ENCODE measurements at regions of chr17 and their contacts with region 1.

Region 1: DNA sequence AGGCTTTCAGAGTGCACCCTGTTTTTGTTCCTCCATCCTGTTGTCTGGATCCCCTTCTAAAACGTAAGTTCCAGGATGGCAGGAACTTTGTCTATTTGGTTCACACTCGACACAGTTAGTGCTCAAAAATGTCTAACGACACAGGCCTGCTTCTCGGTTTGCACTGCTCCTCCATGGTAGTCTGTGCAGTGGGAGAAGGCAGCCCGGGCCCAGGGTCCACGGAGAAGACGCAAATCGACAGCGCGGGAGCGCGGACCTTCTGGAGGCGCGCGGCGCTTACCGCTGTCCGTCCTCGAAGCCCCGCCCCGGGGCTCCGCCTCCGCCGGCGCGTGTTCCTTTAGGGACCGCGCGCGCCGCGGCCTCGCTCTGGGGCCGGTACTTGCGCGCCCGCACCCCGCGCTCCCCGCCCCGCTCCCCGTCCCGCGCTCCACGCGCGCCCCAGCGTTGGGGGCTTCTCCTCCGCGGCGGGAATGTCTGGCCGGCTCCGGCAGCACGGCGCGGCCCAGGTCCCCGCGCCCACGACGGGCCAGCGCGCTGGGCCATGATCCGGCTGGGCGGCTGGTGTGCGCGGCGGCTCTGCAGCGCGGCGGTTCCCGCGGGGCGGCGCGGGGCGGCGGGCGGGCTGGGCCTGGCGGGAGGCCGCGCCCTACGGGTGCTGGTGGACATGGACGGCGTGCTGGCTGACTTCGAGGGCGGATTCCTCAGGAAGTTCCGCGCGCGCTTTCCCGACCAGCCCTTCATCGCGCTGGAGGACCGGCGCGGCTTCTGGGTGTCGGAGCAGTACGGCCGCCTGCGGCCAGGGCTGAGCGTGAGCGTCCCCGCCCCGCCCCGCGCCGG is at the start of gene NT5M:
- DNase-seq: no peak
- ATAC-seq: peak; percentile 77
- H3K4me3 ChIP-seq: peak within 1 kb of the TSS; percentile 94
- H3K27ac ChIP-seq: peak within 1 kb of the TSS; percentile 35
- H3K4me1 ChIP-seq: peaks cover 34% of the 10 kb centered on the region
- H3K27me3 ChIP-seq: no peaks in the 10 kb centered on the region
- CTCF ChIP-seq: no peak
- EP300 ChIP-seq: no peak
- POLR2A ChIP-seq: peak; percentile 70
- RAD21 ChIP-seq: no peak
- polyA plus RNA-seq, gene NT5M: 0.18 to 1.5 TPM

Region 2: GRCh38 chr17:17206124-17206912 is 96.9 kb before region 1 on chr17 and contains the start of gene PLD6:
- CTCF ChIA-PET with region 1: interaction called, 3 read pairs
- POLR2A ChIA-PET with region 1: no interaction called
- RAD21 ChIA-PET with region 1: no interaction called
- SMC1A ChIA-PET with region 1: no interaction called
- in situ Hi-C with region 1: no loop called
- intact Hi-C with region 1: loop called (anchors 10 kb)
- DNase-seq: peak; percentile 72
- ATAC-seq: peak; percentile 83
- H3K4me3 ChIP-seq: peak within 1 kb of the TSS; percentile 74
- H3K27ac ChIP-seq: peak within 1 kb of the TSS; percentile 58
- H3K4me1 ChIP-seq: peaks cover 9% of the 10 kb centered on the region; the same call in 1 of the 2 replicates
- H3K27me3 ChIP-seq: no peaks in the 10 kb centered on the region
- CTCF ChIP-seq: no peak
- EP300 ChIP-seq: no peak
- POLR2A ChIP-seq: peak; percentile 86
- RAD21 ChIP-seq: no peak
- polyA plus RNA-seq, gene PLD6: 4.7 to 21.4 TPM

Region 3: GRCh38 chr17:17237026-17237799 is 66.0 kb before region 1 on chr17 and contains the start of gene FLCN:
- CTCF ChIA-PET with region 1: no interaction called
- POLR2A ChIA-PET with region 1: interaction called, 4 read pairs
- RAD21 ChIA-PET with region 1: no interaction called
- SMC1A ChIA-PET with region 1: interaction called, 3 read pairs
- in situ Hi-C with region 1: no loop called
- intact Hi-C with region 1: loop called (anchors 2 kb)
- DNase-seq: peak; percentile 65
- ATAC-seq: peak; percentile 96
- H3K4me3 ChIP-seq: peak within 1 kb of the TSS; percentile 97
- H3K27ac ChIP-seq: peak within 1 kb of the TSS; percentile 100
- H3K4me1 ChIP-seq: peaks cover 6% of the 10 kb centered on the region
- H3K27me3 ChIP-seq: no peaks in the 10 kb centered on the region
- CTCF ChIP-seq: no peak
- EP300 ChIP-seq: no peak
- POLR2A ChIP-seq: peak; percentile 90
- RAD21 ChIP-seq: no peak
- polyA plus RNA-seq, gene FLCN: 1.1 to 1.7 TPM

Region 4: DNA sequence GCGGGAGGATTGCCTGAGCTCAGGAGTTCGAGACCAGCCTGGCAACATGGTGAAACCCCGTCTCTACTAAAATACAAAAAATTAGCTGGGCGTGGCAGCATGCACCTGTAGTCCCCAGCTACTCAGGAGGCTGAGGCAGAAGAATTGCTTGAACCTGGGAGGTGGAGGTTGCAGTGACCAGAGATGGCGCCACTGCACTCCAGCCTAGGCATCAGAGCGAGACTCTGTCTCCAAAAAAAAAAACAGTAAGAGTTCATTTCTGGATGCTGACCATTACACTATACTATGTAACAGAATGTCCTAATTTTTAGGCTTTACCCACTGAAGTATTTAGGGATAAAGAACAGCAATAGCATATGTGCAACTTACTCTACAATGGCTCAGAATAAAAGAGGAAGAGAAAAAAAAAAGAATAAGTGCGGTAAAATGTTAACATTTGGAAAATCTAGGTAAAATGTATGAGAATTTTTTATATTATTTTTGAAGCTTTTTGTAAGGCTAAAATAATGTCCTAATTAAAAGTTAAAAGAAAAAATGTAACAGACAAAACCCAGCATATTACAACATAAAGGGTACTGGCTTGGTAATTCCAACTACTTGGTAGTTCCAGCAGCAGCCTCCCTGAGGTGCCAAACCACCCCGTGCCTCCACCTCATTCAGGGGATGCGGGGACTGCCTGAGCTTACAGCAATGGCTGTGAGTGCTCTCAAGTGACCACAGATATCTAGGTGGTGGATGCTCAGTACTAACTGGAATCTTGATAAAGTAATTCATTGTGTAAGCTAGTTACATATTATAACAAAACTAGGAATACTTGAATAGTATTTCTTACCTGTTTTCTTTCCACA is 33.1 kb before region 1 on chr17:
- CTCF ChIA-PET with region 1: interaction called, 13 read pairs
- POLR2A ChIA-PET with region 1: no interaction called
- RAD21 ChIA-PET with region 1: interaction called, 4 read pairs
- SMC1A ChIA-PET with region 1: interaction called, 6 read pairs
- in situ Hi-C with region 1: no loop called
- intact Hi-C with region 1: no loop called
- DNase-seq: no peak
- ATAC-seq: peak; percentile 45
- H3K4me3 ChIP-seq: no peak overlapping the region
- H3K27ac ChIP-seq: no peak overlapping the region
- H3K4me1 ChIP-seq: no peaks in the 10 kb centered on the region
- H3K27me3 ChIP-seq: no peaks in the 10 kb centered on the region
- CTCF ChIP-seq: peak in 2 of 3 experiments; percentile 23 to 30; a peak in 3 of 6 replicates
- EP300 ChIP-seq: no peak
- POLR2A ChIP-seq: no peak
- RAD21 ChIP-seq: no peak